ENCODE measurements at regions of chr2 and their contacts with region 1.

Region 1: GRCh38 chr2:20661067-20661980 is 5.6 kb upstream of the GDF7 start:
- DNase-seq: peak; percentile 72
- ATAC-seq: peak; percentile 86
- H3K4me3 Mint-ChIP-seq: no peak overlapping the region
- H3K27ac Mint-ChIP-seq: no peak overlapping the region
- H3K4me1 Mint-ChIP-seq: peaks cover 9% of the 10 kb centered on the region
- H3K27me3 Mint-ChIP-seq: peaks cover 49% of the 10 kb centered on the region
- CTCF ChIP-seq: peak; percentile 93

Region 2: GRCh38 chr2:20496081-20496876 is 165.0 kb before region 1 on chr2:
- CTCF ChIA-PET with region 1: no interaction called
- POLR2A ChIA-PET with region 1: no interaction called
- intact Hi-C with region 1: no loop called
- DNase-seq: no peak
- ATAC-seq: no peak
- H3K4me3 Mint-ChIP-seq: no peak overlapping the region
- H3K27ac Mint-ChIP-seq: no peak overlapping the region
- H3K4me1 Mint-ChIP-seq: no peaks in the 10 kb centered on the region
- H3K27me3 Mint-ChIP-seq: no peaks in the 10 kb centered on the region
- CTCF ChIP-seq: no peak

Region 3: DNA sequence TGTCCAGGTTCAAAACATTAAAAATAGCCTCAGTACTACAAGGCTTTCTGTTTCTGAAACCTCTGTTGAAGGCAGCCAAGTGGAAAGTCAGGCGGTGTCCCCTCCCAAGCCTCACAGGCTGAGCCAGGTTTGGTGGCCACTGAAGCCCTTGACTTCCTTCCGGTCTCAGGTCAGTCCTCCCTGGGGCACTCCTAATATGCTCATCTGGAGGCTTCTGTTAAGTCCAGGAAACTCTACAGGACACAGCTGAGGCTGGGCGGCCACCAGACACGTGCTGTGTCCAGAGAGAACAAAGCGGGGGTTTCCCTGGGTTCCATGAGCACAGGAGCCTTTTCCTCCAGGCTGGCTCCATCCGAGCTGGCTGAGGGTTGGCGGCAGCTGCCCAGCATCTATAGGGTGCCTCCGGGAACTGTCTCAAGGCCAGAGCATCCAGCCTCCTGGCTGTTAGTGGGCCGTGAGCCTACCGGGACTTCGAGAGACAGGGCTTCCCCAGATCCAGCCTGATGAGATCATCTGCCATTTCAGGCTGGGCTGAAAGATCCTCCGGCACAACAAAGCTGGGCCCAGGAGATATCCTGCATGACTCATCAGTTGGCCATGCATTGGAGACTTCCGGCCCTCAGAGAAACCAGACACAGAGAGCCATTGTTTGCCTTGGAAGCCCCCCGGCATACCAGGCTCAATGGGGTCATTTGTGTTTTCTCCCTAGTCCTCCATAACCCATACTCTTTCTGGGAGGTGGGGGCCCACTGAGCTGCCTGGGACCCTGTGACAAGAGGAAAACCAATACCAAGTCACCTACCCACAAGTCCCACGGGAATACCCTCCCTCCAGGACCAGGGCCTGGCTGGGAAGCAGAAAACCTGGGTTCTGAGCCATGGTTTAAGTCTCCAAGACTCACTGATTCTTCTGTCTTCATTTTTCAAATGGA is 82.2 kb before region 1 on chr2:
- CTCF ChIA-PET with region 1: no interaction called
- POLR2A ChIA-PET with region 1: no interaction called
- intact Hi-C with region 1: no loop called
- DNase-seq: no peak
- ATAC-seq: no peak
- H3K4me3 Mint-ChIP-seq: no peak overlapping the region
- H3K27ac Mint-ChIP-seq: peak overlapping the region; percentile 34
- H3K4me1 Mint-ChIP-seq: peaks cover 26% of the 10 kb centered on the region
- H3K27me3 Mint-ChIP-seq: no peaks in the 10 kb centered on the region
- CTCF ChIP-seq: no peak

Region 4: DNA sequence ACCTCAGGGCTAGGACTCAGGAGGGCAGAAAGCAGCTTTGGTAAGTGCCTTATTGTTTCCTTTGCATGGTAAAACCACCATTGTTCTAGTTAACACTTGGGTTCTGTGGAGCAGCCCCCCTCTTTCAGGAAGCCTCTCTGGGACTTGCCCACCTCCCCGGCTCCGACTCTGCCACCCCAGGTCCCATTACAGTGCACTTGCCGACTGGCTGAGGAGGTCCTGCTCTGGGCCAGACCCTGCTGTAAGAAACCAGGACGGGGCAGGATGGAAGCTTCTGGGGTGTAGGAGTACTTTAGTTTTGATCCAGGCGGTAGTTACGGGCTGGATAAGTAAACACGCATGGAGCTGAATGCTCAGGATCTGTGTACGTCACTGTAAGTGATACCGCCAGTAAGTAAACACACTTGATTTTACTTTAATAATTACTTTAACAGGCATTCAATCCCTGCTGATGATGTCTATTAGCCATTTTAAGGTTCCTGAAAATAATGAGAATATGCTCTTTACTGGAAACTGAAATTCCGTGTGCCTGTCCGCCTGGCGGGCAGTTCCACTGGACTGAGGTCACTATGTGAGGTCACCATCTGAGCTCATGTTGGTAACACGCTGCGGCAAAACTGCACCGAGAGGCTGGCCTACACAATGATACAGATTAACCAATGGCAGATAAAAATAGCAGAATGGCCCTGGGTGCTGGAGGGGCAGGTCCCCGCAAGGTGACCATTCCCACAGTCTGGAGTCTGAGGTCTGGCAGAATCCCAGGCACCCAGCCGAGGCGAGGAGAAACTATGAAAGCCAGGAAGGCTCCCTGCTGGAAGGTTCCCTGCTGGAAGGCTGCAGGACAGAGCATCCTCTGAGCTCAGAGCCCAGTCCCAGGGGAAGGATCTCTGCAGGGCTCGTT is 35.6 kb before region 1 on chr2:
- CTCF ChIA-PET with region 1: no interaction called
- POLR2A ChIA-PET with region 1: no interaction called
- intact Hi-C with region 1: no loop called
- DNase-seq: no peak
- ATAC-seq: no peak
- H3K4me3 Mint-ChIP-seq: no peak overlapping the region
- H3K27ac Mint-ChIP-seq: no peak overlapping the region
- H3K4me1 Mint-ChIP-seq: no peaks in the 10 kb centered on the region
- H3K27me3 Mint-ChIP-seq: no peaks in the 10 kb centered on the region
- CTCF ChIP-seq: no peak

Region 5: DNA sequence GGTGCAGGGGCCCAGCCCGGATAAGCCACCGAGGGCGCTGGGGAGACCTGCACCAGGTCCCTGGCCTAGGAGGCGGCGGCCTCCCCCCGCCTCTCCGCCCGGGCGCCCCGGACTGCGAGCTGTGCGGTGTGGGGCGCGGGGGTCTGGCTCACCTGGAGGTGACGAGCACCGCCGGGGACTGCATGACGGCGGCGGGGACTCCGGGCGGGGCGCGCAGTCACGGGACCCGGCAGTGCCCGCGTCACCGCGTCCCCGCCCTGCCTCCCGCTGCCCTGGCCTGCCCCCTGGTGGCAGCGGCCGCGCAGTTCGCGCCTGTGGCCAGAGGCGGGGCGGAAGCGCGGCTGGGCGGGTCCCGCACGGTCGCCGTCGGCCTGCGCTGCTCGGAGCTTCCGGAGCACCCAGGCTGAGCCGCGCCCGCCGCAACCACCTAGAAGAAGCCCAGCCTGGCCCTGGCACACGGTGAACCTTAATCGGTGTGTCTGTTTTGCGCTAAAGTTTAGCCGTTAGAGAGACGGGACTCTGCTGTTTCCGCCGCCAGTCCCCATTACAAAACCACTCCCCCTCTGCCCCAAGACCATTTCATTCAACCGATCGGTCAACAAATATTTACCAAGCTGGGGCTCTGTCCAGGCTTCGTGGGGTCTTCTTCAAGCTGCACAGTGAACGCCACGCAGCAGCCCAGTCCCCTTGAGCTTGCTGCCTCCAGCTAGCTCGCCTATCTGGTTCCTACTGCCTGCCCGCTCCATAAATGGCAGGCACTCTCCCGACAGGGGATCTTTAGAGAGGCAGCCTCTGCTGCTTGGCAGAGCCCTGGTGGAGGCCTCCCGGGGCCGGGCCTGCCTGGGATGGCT is 10.2 kb before region 1 on chr2 and contains the start of gene HS1BP3:
- CTCF ChIA-PET with region 1: interaction called, 46 read pairs
- POLR2A ChIA-PET with region 1: interaction called, 7 read pairs
- intact Hi-C with region 1: no loop called
- DNase-seq: peak; percentile 85
- ATAC-seq: peak; percentile 97
- H3K4me3 Mint-ChIP-seq: peak within 1 kb of the TSS; percentile 77
- H3K27ac Mint-ChIP-seq: peak within 1 kb of the TSS; percentile 85
- H3K4me1 Mint-ChIP-seq: peaks cover 17% of the 10 kb centered on the region
- H3K27me3 Mint-ChIP-seq: no peaks in the 10 kb centered on the region
- CTCF ChIP-seq: peak; percentile 83
- total RNA-seq, gene HS1BP3: 6.5 to 7.9 TPM

Region 6: DNA sequence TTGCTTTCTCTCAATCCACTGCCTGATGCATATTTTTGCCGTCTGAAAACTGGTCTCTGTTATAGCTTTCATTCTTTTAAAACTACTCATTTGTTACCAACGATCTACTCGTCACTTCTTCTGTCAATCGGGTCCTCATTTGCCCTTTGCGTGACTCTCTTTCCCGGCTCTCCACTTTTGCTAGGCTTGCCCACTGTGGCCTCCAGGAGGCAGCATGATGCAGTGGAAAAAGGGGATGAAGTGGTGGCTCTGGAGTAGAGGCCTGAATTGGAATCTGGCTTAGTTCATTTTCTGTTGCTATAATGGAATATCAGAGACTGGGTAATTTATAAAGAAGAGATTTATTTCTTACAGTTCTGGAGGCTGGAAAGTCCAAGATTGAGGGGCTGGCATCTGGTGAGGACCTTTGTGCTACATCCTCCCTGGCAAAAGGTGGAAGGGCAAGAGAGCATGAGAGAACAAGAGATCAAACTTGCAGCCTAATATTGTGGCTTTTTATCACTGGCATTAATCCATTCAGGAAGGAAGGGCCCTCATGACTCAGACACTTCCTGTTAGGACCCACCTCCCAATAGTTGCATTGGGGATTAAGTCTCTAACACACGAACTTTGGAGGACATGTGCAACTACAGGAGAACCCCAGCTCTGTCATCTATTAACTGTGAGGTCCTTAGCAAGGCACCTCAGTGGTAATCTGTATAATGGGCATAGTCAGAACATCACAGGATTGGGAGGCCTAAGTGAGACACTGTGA is 21.0 kb after region 1 on chr2:
- CTCF ChIA-PET with region 1: interaction called, 83 read pairs
- POLR2A ChIA-PET with region 1: no interaction called
- intact Hi-C with region 1: no loop called
- DNase-seq: no peak
- ATAC-seq: no peak
- H3K4me3 Mint-ChIP-seq: no peak overlapping the region
- H3K27ac Mint-ChIP-seq: no peak overlapping the region
- H3K4me1 Mint-ChIP-seq: no peaks in the 10 kb centered on the region
- H3K27me3 Mint-ChIP-seq: no peaks in the 10 kb centered on the region
- CTCF ChIP-seq: no peak

Region 7: DNA sequence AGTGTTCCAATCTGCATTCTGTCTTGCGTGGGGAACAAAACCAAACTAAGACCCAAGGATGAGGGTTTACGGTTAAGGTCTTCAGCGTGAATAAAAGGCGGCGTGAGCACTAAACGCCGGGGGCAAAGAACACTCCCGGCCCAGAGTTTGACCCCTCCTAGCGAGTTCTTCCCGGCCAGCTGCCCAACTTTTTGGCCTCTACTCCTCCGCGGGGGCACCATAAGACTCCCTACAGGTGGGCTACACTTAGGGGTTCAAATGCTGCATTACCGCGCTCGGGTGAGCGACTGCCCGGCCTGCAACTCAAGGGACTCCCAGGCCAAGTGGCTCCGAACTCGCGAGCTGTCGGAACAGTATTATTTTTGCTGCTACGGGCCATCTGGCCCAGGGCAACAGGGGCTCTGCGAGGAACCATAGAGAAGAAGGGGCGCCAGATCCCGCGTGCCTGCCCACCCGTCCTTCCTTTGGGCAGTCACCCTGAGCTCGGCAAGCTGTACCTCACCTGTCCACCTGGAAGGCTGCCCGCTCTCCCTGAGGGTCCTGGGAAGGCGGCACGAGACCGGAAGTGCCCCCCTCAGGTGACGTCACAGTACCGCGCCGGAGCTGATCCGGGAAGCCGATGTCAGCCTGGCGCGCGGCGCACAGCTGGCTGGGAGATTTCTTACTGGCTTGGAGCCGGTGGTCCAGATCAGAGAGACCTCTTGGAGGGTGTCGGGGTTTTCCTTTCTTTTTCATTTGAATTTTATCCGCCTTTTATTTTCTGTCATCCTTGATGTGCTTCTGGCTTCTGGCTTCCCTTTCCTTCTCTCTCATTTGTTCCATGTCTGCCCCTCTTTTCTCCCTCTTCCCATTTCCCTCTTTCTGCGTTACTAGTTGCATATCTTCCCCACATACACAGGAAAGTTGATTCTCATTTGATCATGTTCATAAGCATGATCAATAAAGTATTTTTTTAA is 161.5 kb after region 1 on chr2 and contains the start of gene LDAH:
- CTCF ChIA-PET with region 1: interaction called, 10 read pairs
- POLR2A ChIA-PET with region 1: interaction called, 3 read pairs
- intact Hi-C with region 1: no loop called
- DNase-seq: peak; percentile 91
- ATAC-seq: peak; percentile 89
- H3K4me3 Mint-ChIP-seq: peak within 1 kb of the TSS; percentile 87
- H3K27ac Mint-ChIP-seq: peak within 1 kb of the TSS; percentile 93
- H3K4me1 Mint-ChIP-seq: peaks cover 23% of the 10 kb centered on the region
- H3K27me3 Mint-ChIP-seq: no peaks in the 10 kb centered on the region
- CTCF ChIP-seq: no peak
- total RNA-seq, gene LDAH: 26.2 to 29.3 TPM